ENCODE measurements at regions of chr12 and their contacts with region 1.

Region 1: GRCh38 chr12:10364815-10365622 is 24.8 kb downstream of the KLRK1 start:
- DNase-seq: peak; percentile 87
- ATAC-seq: peak; percentile 68
- H3K4me3 Mint-ChIP-seq: no peak overlapping the region
- H3K27ac Mint-ChIP-seq: no peak overlapping the region
- H3K4me1 Mint-ChIP-seq: peaks cover 23% of the 10 kb centered on the region
- H3K27me3 Mint-ChIP-seq: no peaks in the 10 kb centered on the region

Region 2: GRCh38 chr12:10331642-10332239 is 33.3 kb before region 1 on chr12:
- CTCF ChIA-PET with region 1: interaction called, 14 read pairs
- POLR2A ChIA-PET with region 1: interaction called, 4 read pairs
- DNase-seq: no peak
- ATAC-seq: peak; percentile 69
- H3K4me3 Mint-ChIP-seq: no peak overlapping the region
- H3K27ac Mint-ChIP-seq: no peak overlapping the region
- H3K4me1 Mint-ChIP-seq: peaks cover 14% of the 10 kb centered on the region
- H3K27me3 Mint-ChIP-seq: no peaks in the 10 kb centered on the region

Region 3: GRCh38 chr12:10395390-10395998 is 30.5 kb after region 1 on chr12:
- CTCF ChIA-PET with region 1: interaction called, 31 read pairs
- POLR2A ChIA-PET with region 1: interaction called, 48 read pairs
- DNase-seq: no peak
- ATAC-seq: peak; percentile 71
- H3K4me3 Mint-ChIP-seq: peak overlapping the region; percentile 57
- H3K27ac Mint-ChIP-seq: peak overlapping the region; percentile 81
- H3K4me1 Mint-ChIP-seq: peaks cover 67% of the 10 kb centered on the region
- H3K27me3 Mint-ChIP-seq: no peaks in the 10 kb centered on the region

Region 4: GRCh38 chr12:10501031-10501430 is 136.0 kb after region 1 on chr12:
- CTCF ChIA-PET with region 1: interaction called, 23 read pairs
- POLR2A ChIA-PET with region 1: interaction called, 4 read pairs
- DNase-seq: no peak
- ATAC-seq: no peak
- H3K4me3 Mint-ChIP-seq: peak overlapping the region; percentile 37
- H3K27ac Mint-ChIP-seq: peak overlapping the region; percentile 49
- H3K4me1 Mint-ChIP-seq: peaks cover 48% of the 10 kb centered on the region
- H3K27me3 Mint-ChIP-seq: no peaks in the 10 kb centered on the region

Region 5: GRCh38 chr12:10562306-10562933 is 197.4 kb after region 1 on chr12:
- CTCF ChIA-PET with region 1: interaction called, 17 read pairs
- POLR2A ChIA-PET with region 1: interaction called, 5 read pairs
- DNase-seq: peak; percentile 61
- ATAC-seq: no peak
- H3K4me3 Mint-ChIP-seq: peak overlapping the region; percentile 15
- H3K27ac Mint-ChIP-seq: no peak overlapping the region
- H3K4me1 Mint-ChIP-seq: peaks cover 78% of the 10 kb centered on the region
- H3K27me3 Mint-ChIP-seq: no peaks in the 10 kb centered on the region